ENCODE measurements at regions of chr2 and their contacts with region 1.

Region 1: GRCh38 chr2:217166241-217166850 is 306.5 kb upstream of the TNP1 start:
- DNase-seq: no peak
- H3K4me3 ChIP-seq: no peak overlapping the region
- H3K27ac ChIP-seq: no peak overlapping the region
- H3K4me1 ChIP-seq: no peaks in the 10 kb centered on the region
- H3K27me3 ChIP-seq: no peaks in the 10 kb centered on the region
- CTCF ChIP-seq: peak in 2 of 3 experiments; percentile 65 to 66; a peak in 3 of 4 replicates
- EP300 ChIP-seq: no peak
- POLR2A ChIP-seq: no peak
- RAD21 ChIP-seq: peak; percentile 80 to 90

Region 2: DNA sequence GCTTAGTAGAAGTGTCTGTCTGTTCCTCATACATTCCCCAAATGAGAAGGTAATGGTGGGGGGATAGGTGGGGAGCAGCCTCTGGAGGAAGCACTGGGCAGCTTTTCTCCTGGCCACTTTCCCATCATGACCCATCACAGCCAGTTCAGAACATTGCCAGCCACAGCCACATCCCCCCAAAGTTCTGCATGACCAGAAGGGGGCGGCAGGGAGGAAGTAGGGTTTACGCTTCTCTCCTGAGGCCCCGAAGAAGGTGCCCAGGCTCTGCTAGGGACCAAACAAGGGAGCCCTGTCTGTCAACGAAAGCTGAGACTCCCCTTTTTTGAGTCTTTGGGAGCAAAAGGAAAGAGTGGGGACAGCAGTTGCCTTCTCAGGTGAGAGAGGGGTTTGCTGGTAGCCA is 478.7 kb before region 1 on chr2:
- CTCF ChIA-PET with region 1: interaction called, 11 read pairs
- POLR2A ChIA-PET with region 1: interaction called, 3 read pairs
- DNase-seq: peak in 1 of 2 experiments; percentile 92
- H3K4me3 ChIP-seq: no peak overlapping the region
- H3K27ac ChIP-seq: no peak overlapping the region
- H3K4me1 ChIP-seq: peaks cover 9 to 18% (median 12%) of the 10 kb centered on the region in 4 experiments; a peak in 6 of 7 replicates
- H3K27me3 ChIP-seq: peaks cover 0 to 12% (median 4%) of the 10 kb centered on the region in 4 experiments; a peak in 5 of 7 replicates
- CTCF ChIP-seq: peak; percentile 89 to 92 (median 90)
- EP300 ChIP-seq: no peak
- POLR2A ChIP-seq: no peak
- RAD21 ChIP-seq: peak; percentile 65 to 81

Region 3: DNA sequence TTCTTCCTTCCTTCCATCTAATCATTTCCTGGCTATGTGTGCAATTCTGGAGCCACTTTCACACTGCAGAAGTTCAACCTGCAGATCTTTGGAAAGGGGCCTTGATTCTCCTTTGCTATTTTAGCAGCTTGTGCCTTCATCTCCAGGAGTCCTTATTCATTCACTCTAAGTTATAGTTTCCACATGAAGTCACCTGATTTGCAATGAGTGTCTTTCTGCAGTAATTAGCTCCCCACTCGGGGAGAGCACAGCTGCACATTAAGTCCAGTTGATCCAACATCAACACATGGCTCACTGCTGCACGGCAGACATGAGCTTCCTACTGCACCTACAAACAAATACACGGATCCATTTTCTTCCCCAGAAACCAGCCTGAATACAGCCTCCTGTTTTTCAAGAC is 16.6 kb after region 1 on chr2:
- CTCF ChIA-PET with region 1: interaction called, 10 read pairs
- POLR2A ChIA-PET with region 1: no interaction called
- DNase-seq: no peak
- H3K4me3 ChIP-seq: no peak overlapping the region
- H3K27ac ChIP-seq: no peak overlapping the region
- H3K4me1 ChIP-seq: peaks cover 0 to 2% (median 0%) of the 10 kb centered on the region in 4 experiments; a peak in 1 of 7 replicates
- H3K27me3 ChIP-seq: no peaks in the 10 kb centered on the region; a peak in 1 of 7 replicates
- CTCF ChIP-seq: no peak
- EP300 ChIP-seq: no peak
- POLR2A ChIP-seq: no peak
- RAD21 ChIP-seq: no peak